Keratinocyte (primary cell): ENCODE measurements at regions of chr3 and their contacts with region 1.

Region 1: DNA sequence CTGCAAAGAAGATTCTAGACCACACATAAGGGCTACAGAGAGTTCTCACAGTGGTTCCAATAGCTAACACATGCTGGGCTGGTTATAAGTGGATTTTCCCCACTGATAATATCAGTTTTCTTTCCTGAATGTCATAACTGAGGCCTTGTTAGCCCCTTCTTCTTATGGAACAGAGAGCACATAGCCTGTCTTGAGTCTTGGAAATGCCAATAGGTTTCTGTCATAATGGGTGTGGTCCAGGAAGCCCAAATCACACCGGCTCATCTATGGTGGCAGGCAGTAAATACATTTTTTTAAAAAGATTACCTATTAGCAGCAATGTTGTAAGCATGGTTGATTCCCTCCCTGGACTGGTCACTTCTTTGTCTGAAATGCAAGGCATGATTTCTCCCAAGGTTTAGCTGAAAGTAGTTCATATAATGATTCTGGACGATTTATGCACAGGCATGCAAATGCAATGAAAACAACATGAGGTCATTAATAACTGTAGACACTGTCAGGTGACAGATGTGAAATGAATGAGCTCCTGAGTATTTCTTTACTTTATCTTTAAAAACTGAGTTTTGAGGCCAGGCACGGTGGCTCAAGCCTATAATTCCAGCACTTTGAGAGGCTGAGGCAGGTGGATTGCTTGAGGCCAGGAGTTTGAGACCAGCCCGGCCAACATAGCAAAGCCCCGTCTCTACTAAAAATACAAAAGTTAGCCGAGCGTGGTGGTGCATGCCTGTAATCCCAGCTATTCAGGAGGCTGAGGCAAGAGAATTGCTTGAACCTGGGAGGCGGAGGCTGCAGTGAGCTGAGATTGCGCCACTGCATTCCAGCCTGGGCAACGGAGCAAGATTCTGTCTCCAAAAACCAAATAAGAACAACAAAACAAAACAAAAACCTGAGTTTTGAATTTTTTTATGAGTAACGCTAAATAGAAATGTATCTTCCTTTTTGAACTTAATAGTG is 67.1 kb upstream of the ATP2C1 start:
- DNase-seq: no peak
- H3K4me3 ChIP-seq: no peak overlapping the region
- H3K27ac ChIP-seq: no peak overlapping the region
- H3K4me1 ChIP-seq: peaks cover 6% of the 10 kb centered on the region
- H3K27me3 ChIP-seq: no peaks in the 10 kb centered on the region
- CTCF ChIP-seq: no peak

Region 2: DNA sequence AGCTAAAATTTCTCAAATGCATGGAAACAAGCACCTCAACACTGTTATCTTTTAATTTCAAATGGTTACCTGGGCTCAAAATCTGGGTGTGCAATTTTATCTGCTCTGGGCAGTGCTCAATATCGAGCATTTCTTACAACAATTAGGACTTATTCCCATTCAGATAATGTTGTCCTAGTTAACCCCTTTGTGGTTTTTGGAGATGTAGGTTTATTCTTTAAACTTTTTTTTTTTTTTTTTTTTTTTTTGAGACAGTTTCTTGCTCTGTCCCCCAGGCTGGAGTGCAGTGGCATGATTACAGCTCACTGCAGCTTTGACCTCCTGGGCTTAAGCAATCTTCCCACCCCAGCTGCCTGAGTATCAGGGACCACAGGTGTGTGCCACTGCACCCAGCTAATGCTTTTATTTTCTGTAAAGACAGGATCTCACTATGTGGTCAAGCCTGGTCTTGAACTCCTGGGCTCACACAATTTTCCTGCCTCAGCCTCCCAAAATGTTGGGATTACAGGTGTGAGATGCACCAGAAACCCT is 62.7 kb after region 1 on chr3:
- dilution Hi-C with region 1: loop called (anchors 5 kb)
- DNase-seq: no peak
- H3K4me3 ChIP-seq: no peak overlapping the region
- H3K27ac ChIP-seq: no peak overlapping the region
- H3K4me1 ChIP-seq: peaks cover 2% of the 10 kb centered on the region
- H3K27me3 ChIP-seq: no peaks in the 10 kb centered on the region
- CTCF ChIP-seq: no peak